Activated CD4-positive, alpha-beta T cell treated with anti-CD3 and anti-CD28 coated beads, Interleukin-2, amount 10 ng/mL, durations not matched to agents 24 days and 14 days (primary cell): ENCODE measurements at regions of chr17 and their contacts with region 1.

Region 1: DNA sequence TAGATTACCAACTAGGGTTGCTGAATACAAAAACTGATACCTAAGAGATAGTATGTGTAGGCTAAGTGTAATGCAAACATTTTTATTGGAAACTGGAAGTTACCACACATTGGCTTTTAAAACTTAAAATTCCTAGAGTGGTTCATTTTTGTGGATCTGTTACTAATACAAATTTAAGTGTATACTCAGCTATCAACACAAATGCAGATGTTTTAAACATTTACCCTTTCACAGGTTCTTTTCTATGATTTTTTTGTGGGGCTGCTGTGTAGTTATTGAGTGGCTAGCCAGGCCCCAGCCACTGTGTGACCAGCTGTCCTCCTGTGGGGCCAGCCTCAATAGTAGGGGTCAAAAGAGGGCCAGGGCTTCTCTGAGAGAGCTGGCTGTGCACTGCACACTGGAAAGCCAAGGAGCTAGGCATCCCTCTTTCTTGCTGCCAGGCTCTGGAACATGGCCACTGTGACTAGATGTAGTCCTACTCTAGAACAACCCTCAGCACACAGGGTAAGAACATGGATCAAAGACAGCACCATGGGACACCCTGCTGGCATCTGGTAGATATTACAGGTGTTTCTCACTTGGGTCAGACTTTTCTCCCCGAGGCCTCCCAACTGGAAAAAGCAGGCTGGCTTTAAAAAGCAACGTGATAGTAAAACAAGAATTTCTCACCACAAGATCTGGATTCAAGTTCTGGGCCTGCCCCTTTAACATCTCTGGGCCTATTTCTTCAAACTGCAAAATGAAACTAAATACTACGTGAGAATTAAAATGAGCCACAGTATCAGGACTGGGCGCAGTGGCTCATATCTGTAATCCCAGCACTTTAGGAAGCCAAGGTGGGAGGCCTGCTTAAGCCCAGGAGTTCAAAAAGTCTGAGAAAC is 7.3 kb upstream of the VEZF1 start:
- DNase-seq: peak; percentile 83
- H3K4me3 Mint-ChIP-seq: no peak overlapping the region
- H3K27ac Mint-ChIP-seq: peak overlapping the region; percentile 43
- H3K4me1 Mint-ChIP-seq: peaks cover 39% of the 10 kb centered on the region
- H3K27me3 Mint-ChIP-seq: no peaks in the 10 kb centered on the region

Region 2: DNA sequence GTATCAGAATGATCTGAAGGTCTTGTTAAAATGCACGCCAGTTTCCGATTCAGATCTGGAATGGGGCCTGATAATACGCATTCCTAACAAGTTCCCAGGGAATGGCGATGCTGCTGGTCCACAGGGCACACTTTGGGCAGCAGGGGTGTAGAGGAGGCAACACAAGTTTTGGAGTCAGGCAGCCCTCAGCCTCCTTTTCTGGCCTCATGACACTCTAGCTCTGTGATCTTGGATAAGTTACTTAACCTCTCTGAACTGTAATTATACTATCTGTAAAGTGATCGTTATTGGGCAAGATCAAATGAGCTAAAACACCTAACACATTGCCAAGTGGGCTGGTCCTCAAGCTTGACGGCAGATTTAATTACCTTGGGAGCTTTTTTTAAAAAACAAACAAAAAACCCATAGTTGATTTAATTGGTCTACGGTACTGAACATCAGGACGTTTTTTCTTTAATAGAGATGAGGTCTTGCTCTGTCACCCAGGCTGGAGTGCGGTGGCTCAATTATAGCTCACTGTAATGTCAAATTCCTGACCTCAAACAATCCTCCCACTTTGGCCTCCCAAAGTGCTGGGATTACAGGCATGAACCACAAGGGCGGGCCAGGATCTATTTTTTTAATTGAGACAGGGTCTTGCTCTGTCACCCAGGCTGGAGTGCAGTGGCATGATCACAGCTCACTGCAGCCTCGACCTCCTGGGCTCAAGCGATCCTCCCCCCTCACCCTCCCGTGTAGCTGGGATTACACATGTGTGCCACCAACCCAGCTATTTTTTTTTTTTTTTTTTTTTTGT is 135.5 kb before region 1 on chr17:
- intact Hi-C with region 1: loop called (anchors 2 kb)
- DNase-seq: no peak
- H3K4me3 Mint-ChIP-seq: no peak overlapping the region
- H3K27ac Mint-ChIP-seq: no peak overlapping the region
- H3K4me1 Mint-ChIP-seq: peaks cover 9% of the 10 kb centered on the region
- H3K27me3 Mint-ChIP-seq: peaks cover 42% of the 10 kb centered on the region

Region 3: DNA sequence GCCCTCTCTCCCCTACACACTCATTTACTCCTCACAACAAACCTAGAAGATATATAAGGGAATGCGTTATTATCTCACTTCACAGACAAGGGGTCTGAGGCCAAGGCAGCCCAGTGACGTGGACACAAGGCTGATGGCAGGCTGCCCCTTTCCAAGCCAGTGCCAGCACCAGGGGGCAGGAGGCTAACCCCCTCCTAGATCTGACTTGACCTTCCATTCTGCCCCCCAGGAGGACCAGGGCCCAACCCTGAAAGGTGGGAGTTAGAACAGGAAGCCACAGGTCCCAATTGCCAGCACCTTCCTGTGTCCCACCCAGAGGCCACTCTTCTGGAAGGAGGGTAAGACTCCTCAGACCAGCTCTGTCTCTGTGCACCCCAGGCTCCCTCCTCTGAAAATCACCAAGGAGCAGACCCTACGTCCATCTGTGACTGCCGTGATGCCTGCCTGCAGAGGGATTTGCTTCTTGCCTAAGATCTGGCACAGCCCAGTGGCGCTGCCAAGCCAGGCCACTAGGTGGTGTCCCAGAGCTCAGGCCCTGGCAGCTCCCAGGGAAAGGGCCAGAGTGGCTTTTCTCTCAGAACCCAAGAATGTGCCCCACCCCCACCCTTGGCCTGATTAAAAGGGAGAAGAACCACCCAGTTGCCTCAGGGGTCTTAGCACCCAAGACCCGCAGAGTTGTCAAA is 103.0 kb before region 1 on chr17:
- intact Hi-C with region 1: loop called (anchors 1 kb)
- DNase-seq: peak; percentile 94
- H3K4me3 Mint-ChIP-seq: no peak overlapping the region
- H3K27ac Mint-ChIP-seq: no peak overlapping the region
- H3K4me1 Mint-ChIP-seq: peaks cover 6% of the 10 kb centered on the region
- H3K27me3 Mint-ChIP-seq: peaks cover 3% of the 10 kb centered on the region

Region 4: DNA sequence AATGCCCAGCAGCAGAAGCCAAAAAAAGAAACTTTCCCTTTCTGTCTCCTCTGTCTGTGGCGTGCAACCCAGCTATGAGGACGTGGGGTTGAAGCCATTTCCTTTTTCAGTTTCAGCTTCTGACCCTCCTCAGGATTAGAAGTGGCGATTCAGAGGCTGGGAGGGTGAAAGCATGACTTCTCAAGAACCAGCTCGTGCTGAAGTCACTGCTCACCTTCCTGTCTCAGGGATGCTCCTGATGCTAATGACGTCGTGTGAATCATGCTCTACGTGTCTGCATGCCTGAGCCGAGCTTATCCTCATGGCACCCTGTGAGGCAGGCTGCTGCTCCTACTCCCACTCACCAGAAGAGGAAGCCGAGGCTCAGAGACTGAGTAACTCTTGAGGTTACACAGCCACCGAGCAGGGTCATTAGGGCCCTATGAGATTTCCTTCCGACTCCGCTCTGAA is 237.4 kb after region 1 on chr17:
- intact Hi-C with region 1: no loop called
- DNase-seq: no peak
- H3K4me3 Mint-ChIP-seq: no peak overlapping the region
- H3K27ac Mint-ChIP-seq: no peak overlapping the region
- H3K4me1 Mint-ChIP-seq: peaks cover 7% of the 10 kb centered on the region
- H3K27me3 Mint-ChIP-seq: peaks cover 56% of the 10 kb centered on the region